ENCODE measurements at regions of chr1 and their contacts with region 1.

Region 1: GRCh38 chr1:76074321-76075187 is at the start of gene ST6GALNAC3:
- DNase-seq: peak; percentile 73 to 85 (median 81)
- ATAC-seq: peak; percentile 98
- H3K4me3 ChIP-seq: peak within 1 kb of the TSS; percentile 74
- H3K4me3 Mint-ChIP-seq: peak within 1 kb of the TSS; percentile 86 to 93 (median 91)
- H3K27ac ChIP-seq: peak within 1 kb of the TSS; percentile 71
- H3K27ac Mint-ChIP-seq: peak within 1 kb of the TSS; percentile 56 to 97 (median 92)
- H3K4me1 ChIP-seq: peaks cover 9 to 15% of the 10 kb centered on the region in 2 donors
- H3K4me1 Mint-ChIP-seq: peaks cover 8 to 35% (median 26%) of the 10 kb centered on the region in 7 donors
- H3K27me3 ChIP-seq: no peaks in the 10 kb centered on the region
- H3K27me3 Mint-ChIP-seq: peaks cover 0 to 19% (median 0%) of the 10 kb centered on the region in 5 donors
- total RNA-seq, gene ST6GALNAC3: 1.9 to 4.8 (median 3.6) TPM in 4 of 5 experiments, not detected in the other

Region 2: DNA sequence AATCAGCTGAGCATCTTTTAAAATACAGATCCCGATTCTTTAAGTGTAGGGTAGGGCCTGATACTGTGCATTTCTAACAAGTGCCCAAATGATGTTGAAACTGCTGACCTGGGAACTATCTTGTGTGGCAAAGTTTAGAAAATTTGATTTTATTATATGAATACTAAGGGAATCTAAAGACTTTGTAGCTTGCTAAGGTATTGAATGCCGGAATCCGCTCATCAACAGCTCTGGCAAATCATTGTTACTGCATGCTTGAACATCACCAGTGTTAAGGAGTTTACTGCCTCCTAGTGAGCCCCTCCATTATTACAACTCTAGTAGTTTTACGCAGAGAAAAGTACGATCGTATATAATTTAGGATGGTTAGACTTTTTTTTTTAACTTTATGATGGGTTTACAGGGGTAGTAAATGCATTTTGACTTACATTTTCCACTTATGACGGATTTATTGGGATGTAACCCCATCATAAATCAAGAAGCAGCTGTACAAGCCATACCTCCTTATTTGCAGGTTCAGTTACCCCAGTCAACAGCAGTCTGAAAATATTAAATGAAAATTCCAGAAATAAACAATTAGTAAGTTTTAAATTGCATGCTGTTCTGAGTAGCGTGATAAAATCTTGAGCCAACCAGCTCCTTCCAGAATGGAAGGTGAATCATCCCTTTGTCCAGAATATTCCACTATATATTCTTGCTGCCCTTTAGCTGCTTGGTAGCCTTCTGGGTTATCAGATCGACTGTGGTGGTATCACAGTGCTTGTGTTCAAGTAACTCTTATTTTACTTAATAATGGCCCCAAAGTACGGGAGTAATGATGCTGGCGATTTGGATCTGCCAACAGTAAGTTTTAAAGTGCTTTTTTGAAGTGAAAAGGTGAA is 1340.7 kb before region 1 on chr1:
- CTCF ChIA-PET with region 1: no interaction called
- POLR2A ChIA-PET with region 1: no interaction called
- intact Hi-C with region 1: loop called in 1 of 2 experiments (anchors 2 kb)
- DNase-seq: peak in 7 of 9 donors; percentile 55 to 75 (median 67)
- ATAC-seq: peak; percentile 85
- H3K4me3 ChIP-seq: peak overlapping the region; percentile 93
- H3K4me3 Mint-ChIP-seq: peak overlapping the region; percentile 84 to 100 (median 98)
- H3K27ac ChIP-seq: peak overlapping the region; percentile 76
- H3K27ac Mint-ChIP-seq: peak overlapping the region; percentile 92 to 99 (median 95)
- H3K4me1 ChIP-seq: peaks cover 21 to 24% of the 10 kb centered on the region in 2 donors
- H3K4me1 Mint-ChIP-seq: peaks cover 22 to 64% (median 43%) of the 10 kb centered on the region in 7 donors
- H3K27me3 ChIP-seq: no peaks in the 10 kb centered on the region
- H3K27me3 Mint-ChIP-seq: no peaks in the 10 kb centered on the region

Region 3: GRCh38 chr1:75785983-75786853 is 288.3 kb before region 1 on chr1 and contains the start of gene RABGGTB:
- CTCF ChIA-PET with region 1: no interaction called
- POLR2A ChIA-PET with region 1: no interaction called
- intact Hi-C with region 1: loop called (anchors 2 to 5 kb)
- DNase-seq: peak; percentile 87 to 94 (median 91)
- ATAC-seq: peak; percentile 98
- H3K4me3 ChIP-seq: peak within 1 kb of the TSS; percentile 97
- H3K4me3 Mint-ChIP-seq: peak within 1 kb of the TSS; percentile 88 to 99 (median 97)
- H3K27ac ChIP-seq: peak within 1 kb of the TSS; percentile 83
- H3K27ac Mint-ChIP-seq: peak within 1 kb of the TSS; percentile 85 to 99 (median 97)
- H3K4me1 ChIP-seq: peaks cover 33 to 44% of the 10 kb centered on the region in 2 donors
- H3K4me1 Mint-ChIP-seq: peaks cover 44 to 62% (median 48%) of the 10 kb centered on the region in 7 donors
- H3K27me3 ChIP-seq: no peaks in the 10 kb centered on the region
- H3K27me3 Mint-ChIP-seq: peaks cover 0 to 7% (median 0%) of the 10 kb centered on the region in 5 donors
- total RNA-seq, gene RABGGTB: 89.7 to 140 (median 101) TPM

Region 4: DNA sequence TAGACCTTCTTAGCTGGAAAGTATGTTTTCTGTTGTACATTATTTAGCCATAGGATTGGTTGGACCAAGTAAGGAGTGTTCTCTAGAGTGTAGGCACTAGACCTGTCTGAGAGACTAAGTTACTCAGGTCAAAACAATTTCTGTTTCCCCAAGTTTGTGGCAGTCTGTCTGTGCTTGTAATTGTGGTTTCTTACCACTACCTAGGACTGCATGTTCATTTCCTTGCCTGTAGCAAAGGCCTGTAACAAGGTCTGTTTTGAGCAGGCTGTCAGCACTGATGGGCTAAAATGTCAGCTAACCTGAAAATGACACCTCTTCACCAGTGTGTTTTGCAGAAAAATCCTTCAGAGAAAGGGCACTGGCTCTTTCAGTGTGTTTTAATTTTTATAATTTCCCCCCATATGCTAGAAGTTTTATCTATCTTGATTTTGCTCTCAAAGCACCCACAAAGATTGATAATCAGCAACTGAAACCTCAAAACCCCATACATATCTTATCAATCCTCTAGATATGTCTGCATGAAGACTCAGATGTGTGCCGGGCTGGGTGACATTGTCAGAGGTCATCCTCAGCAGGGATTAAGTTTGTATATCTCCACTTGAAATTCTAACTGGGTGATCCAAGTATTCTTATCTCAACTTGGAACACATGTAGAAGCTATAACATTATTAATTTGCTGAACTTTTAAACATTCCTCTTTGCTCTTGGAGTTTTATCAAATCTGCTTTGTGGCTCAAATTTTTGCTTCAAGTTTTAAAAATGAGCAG is 50.7 kb before region 1 on chr1:
- CTCF ChIA-PET with region 1: no interaction called
- POLR2A ChIA-PET with region 1: no interaction called
- intact Hi-C with region 1: loop called in 1 of 2 experiments (anchors 1 kb)
- DNase-seq: peak in 5 of 9 donors; percentile 4 to 32 (median 18)
- ATAC-seq: peak; percentile 54
- H3K4me3 ChIP-seq: no peak overlapping the region
- H3K4me3 Mint-ChIP-seq: peak overlapping the region in 5 of 10 donors; percentile 8 to 59 (median 32)
- H3K27ac ChIP-seq: no peak overlapping the region
- H3K27ac Mint-ChIP-seq: peak overlapping the region in 8 of 9 donors; percentile 7 to 92 (median 77)
- H3K4me1 ChIP-seq: peaks cover 0 to 6% of the 10 kb centered on the region in 2 donors
- H3K4me1 Mint-ChIP-seq: peaks cover 3 to 36% (median 14%) of the 10 kb centered on the region in 7 donors
- H3K27me3 ChIP-seq: no peaks in the 10 kb centered on the region
- H3K27me3 Mint-ChIP-seq: peaks cover 0 to 17% (median 7%) of the 10 kb centered on the region in 5 donors

Region 5: DNA sequence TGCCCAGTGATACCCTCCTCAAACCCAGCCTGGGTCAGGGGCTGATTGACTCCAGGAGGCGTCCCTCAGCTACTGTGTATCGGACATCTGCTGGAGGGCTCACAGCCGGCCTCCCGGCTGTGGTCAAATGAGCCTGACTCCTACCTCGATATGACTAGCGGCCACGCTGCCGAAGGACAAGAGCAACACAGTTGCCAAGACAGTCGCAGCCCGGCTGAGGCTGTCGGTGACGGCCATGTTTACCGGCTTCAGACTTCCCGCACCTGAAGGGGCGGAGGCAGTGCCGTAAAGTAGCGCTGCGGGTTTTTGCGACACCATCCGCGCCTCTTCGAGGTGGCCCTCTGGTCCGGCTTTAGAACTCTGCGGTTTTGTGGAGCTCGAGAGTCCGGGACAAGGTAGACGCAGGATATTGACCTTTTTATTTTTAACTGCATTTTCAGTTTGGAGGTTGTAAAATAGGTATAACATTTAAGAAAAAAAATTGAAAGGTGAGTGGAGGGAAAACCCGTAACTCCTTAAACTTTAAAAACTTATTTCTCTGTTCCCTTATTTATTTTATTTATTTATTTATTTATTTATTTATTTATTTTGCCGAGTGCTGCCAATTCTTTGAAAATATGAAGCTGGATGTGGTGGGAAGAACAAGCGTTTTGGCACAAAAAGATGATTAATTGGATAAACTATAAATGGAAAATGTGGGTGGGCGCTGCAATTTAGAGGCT is 1144.8 kb after region 1 on chr1 and contains the start of gene PIGK:
- CTCF ChIA-PET with region 1: no interaction called
- POLR2A ChIA-PET with region 1: no interaction called
- intact Hi-C with region 1: loop called in 1 of 2 experiments (anchors 10 kb)
- DNase-seq: peak; percentile 62 to 87 (median 84)
- ATAC-seq: peak; percentile 99
- H3K4me3 ChIP-seq: peak within 1 kb of the TSS; percentile 99
- H3K4me3 Mint-ChIP-seq: peak within 1 kb of the TSS; percentile 92 to 97 (median 96)
- H3K27ac ChIP-seq: peak within 1 kb of the TSS; percentile 89
- H3K27ac Mint-ChIP-seq: peak within 1 kb of the TSS; percentile 91 to 99 (median 96)
- H3K4me1 ChIP-seq: peaks cover 13 to 15% of the 10 kb centered on the region in 2 donors
- H3K4me1 Mint-ChIP-seq: peaks cover 34 to 75% (median 62%) of the 10 kb centered on the region in 7 donors
- H3K27me3 ChIP-seq: no peaks in the 10 kb centered on the region
- H3K27me3 Mint-ChIP-seq: no peaks in the 10 kb centered on the region
- total RNA-seq, gene PIGK: 17.7 to 31.3 (median 20.6) TPM

Region 6: DNA sequence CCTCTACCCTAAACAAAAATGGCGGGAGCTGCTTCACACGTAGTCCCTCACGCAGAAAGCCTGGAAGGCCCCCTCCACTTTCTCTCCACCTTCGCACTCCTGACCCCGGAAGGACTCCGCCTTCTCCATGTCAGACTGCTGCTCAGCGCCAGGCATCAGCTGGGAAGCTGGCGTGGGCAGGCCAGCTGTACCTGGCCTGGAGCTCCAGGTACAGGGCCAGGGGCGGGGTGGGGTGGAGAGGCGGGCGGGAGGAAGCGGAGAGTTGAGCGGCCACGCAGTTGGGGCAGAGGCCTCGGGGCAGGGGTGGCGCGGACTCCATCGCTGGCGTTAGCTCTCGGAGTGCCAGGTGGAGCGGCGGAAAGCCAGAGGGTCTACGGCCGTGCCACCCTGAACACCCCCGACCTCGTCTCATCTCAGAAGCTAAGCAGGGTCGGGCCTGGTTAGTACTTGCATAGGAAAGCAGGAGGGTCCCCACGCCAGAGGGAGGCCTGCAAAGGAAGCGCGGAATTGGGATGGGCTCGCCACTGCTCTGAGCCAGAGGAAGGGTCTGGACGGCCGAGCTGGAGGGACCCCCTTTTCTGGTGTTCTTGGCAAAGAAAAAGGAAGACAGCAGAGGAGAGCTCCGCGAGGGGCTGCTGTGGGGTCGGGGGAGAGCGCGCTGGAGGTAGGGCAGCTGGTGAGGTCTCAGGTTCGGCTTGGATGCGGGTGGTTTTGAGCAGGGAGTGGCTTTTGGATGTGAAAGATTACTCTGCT is 1705.2 kb after region 1 on chr1 and contains the start of gene MIGA1:
- CTCF ChIA-PET with region 1: no interaction called
- POLR2A ChIA-PET with region 1: no interaction called
- intact Hi-C with region 1: loop called in 1 of 2 experiments (anchors 5 kb)
- DNase-seq: peak; percentile 61 to 92 (median 86)
- ATAC-seq: peak; percentile 99
- H3K4me3 ChIP-seq: peak within 1 kb of the TSS; percentile 68
- H3K4me3 Mint-ChIP-seq: peak within 1 kb of the TSS; percentile 90 to 98 (median 94)
- H3K27ac ChIP-seq: peak within 1 kb of the TSS; percentile 87
- H3K27ac Mint-ChIP-seq: peak within 1 kb of the TSS; percentile 88 to 96 (median 93)
- H3K4me1 ChIP-seq: peaks cover 11 to 15% of the 10 kb centered on the region in 2 donors
- H3K4me1 Mint-ChIP-seq: peaks cover 21 to 54% (median 49%) of the 10 kb centered on the region in 7 donors
- H3K27me3 ChIP-seq: no peaks in the 10 kb centered on the region
- H3K27me3 Mint-ChIP-seq: peaks cover 0 to 3% (median 0%) of the 10 kb centered on the region in 5 donors
- total RNA-seq, gene MIGA1: 12.1 to 23.5 (median 15.9) TPM

Measured in naive thymus-derived CD4-positive, alpha-beta T cell (primary cell).